MCF 10A (cell line): ENCODE measurements at regions of chr5 and their contacts with region 1.

Region 1: GRCh38 chr5:137344723-137345322 is 154.3 kb downstream of the SPOCK1 start:
- DNase-seq: peak; percentile 78
- H3K4me3 Mint-ChIP-seq: no peak overlapping the region
- H3K27ac Mint-ChIP-seq: no peak overlapping the region
- H3K4me1 Mint-ChIP-seq: peaks cover 8% of the 10 kb centered on the region
- H3K27me3 Mint-ChIP-seq: no peaks in the 10 kb centered on the region
- CTCF ChIP-seq: peak; percentile 94

Region 2: GRCh38 chr5:136802383-136802782 is 542.4 kb before region 1 on chr5:
- CTCF ChIA-PET with region 1: interaction called, 3 read pairs
- POLR2A ChIA-PET with region 1: no interaction called
- intact Hi-C with region 1: loop called (anchors 1 kb)
- DNase-seq: peak; percentile 34
- H3K4me3 Mint-ChIP-seq: no peak overlapping the region
- H3K27ac Mint-ChIP-seq: no peak overlapping the region
- H3K4me1 Mint-ChIP-seq: no peaks in the 10 kb centered on the region
- H3K27me3 Mint-ChIP-seq: peaks cover 43% of the 10 kb centered on the region
- CTCF ChIP-seq: peak; percentile 49

Region 3: GRCh38 chr5:137328463-137328862 is 16.4 kb before region 1 on chr5:
- CTCF ChIA-PET with region 1: interaction called, 41 read pairs
- POLR2A ChIA-PET with region 1: interaction called, 3 read pairs
- intact Hi-C with region 1: no loop called
- DNase-seq: no peak
- H3K4me3 Mint-ChIP-seq: no peak overlapping the region
- H3K27ac Mint-ChIP-seq: no peak overlapping the region
- H3K4me1 Mint-ChIP-seq: no peaks in the 10 kb centered on the region
- H3K27me3 Mint-ChIP-seq: no peaks in the 10 kb centered on the region
- CTCF ChIP-seq: no peak

Region 4: GRCh38 chr5:137356127-137356526 is 11.3 kb after region 1 on chr5:
- CTCF ChIA-PET with region 1: interaction called, 20 read pairs
- POLR2A ChIA-PET with region 1: no interaction called
- intact Hi-C with region 1: no loop called
- DNase-seq: no peak
- H3K4me3 Mint-ChIP-seq: no peak overlapping the region
- H3K27ac Mint-ChIP-seq: no peak overlapping the region
- H3K4me1 Mint-ChIP-seq: no peaks in the 10 kb centered on the region
- H3K27me3 Mint-ChIP-seq: no peaks in the 10 kb centered on the region
- CTCF ChIP-seq: no peak

Region 5: GRCh38 chr5:137361280-137361679 is 16.5 kb after region 1 on chr5:
- CTCF ChIA-PET with region 1: interaction called, 20 read pairs
- POLR2A ChIA-PET with region 1: no interaction called
- intact Hi-C with region 1: no loop called
- DNase-seq: no peak
- H3K4me3 Mint-ChIP-seq: no peak overlapping the region
- H3K27ac Mint-ChIP-seq: no peak overlapping the region
- H3K4me1 Mint-ChIP-seq: no peaks in the 10 kb centered on the region
- H3K27me3 Mint-ChIP-seq: no peaks in the 10 kb centered on the region
- CTCF ChIP-seq: no peak